AG04449 (cell line): ENCODE measurements at regions of chr2 and their contacts with region 1.

Region 1: GRCh38 chr2:58204195-58204959 is 36.7 kb downstream of the FANCL start:
- DNase-seq: no peak
- H3K4me3 ChIP-seq: no peak overlapping the region
- CTCF ChIP-seq: no peak

Region 2: DNA sequence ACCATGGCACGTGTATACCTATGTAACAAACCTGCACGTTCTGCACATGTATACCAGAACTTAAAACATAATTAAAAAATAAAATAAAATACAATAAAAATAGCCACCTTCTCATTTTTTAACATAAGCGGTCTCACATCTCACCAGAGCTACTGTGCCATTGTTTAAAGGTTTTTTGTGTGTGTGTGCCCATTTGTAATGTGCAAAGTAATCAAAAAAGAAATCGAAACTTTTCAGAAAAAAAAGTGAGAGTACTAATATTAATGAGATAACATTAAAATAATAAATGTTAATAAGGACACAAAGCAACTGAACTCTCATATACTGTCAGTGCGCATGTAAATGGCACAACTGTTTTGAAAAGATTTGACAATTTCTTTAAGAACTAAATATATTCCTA is 23.7 kb before region 1 on chr2:
- CTCF ChIA-PET with region 1: no interaction called
- POLR2A ChIA-PET with region 1: no interaction called
- DNase-seq: no peak
- H3K4me3 ChIP-seq: no peak overlapping the region
- CTCF ChIP-seq: no peak

Region 3: GRCh38 chr2:58215429-58215828 is 11.1 kb after region 1 on chr2:
- CTCF ChIA-PET with region 1: interaction called, 10 read pairs
- POLR2A ChIA-PET with region 1: no interaction called
- DNase-seq: no peak
- H3K4me3 ChIP-seq: no peak overlapping the region
- CTCF ChIP-seq: no peak